H1 (cell line): ENCODE measurements at regions of chr22 and their contacts with region 1.

Region 1: DNA sequence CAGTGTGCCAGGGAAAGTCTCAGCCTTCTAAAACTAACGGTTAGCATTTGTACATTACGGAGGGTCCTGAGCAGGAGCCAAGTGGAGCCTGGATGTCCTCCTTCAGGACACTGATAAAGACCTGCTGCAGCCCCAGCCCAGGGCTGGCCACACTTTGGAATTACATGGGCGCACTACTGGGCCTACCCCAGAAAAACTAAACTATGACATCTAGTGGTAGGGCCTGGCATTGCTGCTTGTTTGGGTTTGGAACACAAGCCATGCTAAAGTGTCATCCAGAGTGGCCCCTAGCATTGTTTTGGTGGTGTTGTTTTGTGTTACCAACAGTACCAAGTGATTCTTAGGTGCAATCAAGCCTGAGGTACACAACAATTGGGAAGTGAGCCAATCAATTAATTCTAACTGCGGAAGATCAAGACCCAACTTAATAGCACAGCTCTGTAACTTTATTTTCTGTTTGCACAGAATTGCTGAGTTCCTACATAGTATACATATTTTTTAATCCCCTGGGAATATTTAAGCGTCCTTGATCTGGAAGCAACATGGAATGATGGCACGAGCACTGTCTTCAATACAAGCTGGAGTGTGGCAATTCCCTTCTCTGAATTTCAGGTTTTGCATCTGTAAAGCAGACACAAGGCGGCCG is 340.7 kb downstream of the LARGE1 start:
- DNase-seq: peak; percentile 53 to 94
- H3K4me3 ChIP-seq: no peak overlapping the region
- H3K27ac ChIP-seq: no peak overlapping the region
- H3K4me1 ChIP-seq: no peaks in the 10 kb centered on the region
- H3K27me3 ChIP-seq: no peaks in the 10 kb centered on the region
- CTCF ChIP-seq: peak; percentile 54 to 97 (median 94)
- EP300 ChIP-seq: no peak
- POLR2A ChIP-seq: no peak
- RAD21 ChIP-seq: peak; percentile 88 to 94

Region 2: GRCh38 chr22:33427461-33427860 is 152.1 kb before region 1 on chr22:
- CTCF ChIA-PET with region 1: no interaction called
- POLR2A ChIA-PET with region 1: no interaction called
- DNase-seq: no peak
- H3K4me3 ChIP-seq: no peak overlapping the region
- H3K27ac ChIP-seq: no peak overlapping the region
- H3K4me1 ChIP-seq: peaks cover 0 to 2% (median 0%) of the 10 kb centered on the region in 4 experiments; a peak in 2 of 7 replicates
- H3K27me3 ChIP-seq: no peaks in the 10 kb centered on the region
- CTCF ChIP-seq: no peak
- EP300 ChIP-seq: no peak
- POLR2A ChIP-seq: no peak
- RAD21 ChIP-seq: no peak

Region 3: GRCh38 chr22:33438273-33438672 is 141.3 kb before region 1 on chr22:
- CTCF ChIA-PET with region 1: no interaction called
- POLR2A ChIA-PET with region 1: no interaction called
- DNase-seq: no peak
- H3K4me3 ChIP-seq: no peak overlapping the region
- H3K27ac ChIP-seq: no peak overlapping the region
- H3K4me1 ChIP-seq: peaks cover 0 to 7% (median 2%) of the 10 kb centered on the region in 4 experiments; a peak in 3 of 7 replicates
- H3K27me3 ChIP-seq: no peaks in the 10 kb centered on the region
- CTCF ChIP-seq: no peak
- EP300 ChIP-seq: no peak
- POLR2A ChIP-seq: no peak
- RAD21 ChIP-seq: no peak

Region 4: DNA sequence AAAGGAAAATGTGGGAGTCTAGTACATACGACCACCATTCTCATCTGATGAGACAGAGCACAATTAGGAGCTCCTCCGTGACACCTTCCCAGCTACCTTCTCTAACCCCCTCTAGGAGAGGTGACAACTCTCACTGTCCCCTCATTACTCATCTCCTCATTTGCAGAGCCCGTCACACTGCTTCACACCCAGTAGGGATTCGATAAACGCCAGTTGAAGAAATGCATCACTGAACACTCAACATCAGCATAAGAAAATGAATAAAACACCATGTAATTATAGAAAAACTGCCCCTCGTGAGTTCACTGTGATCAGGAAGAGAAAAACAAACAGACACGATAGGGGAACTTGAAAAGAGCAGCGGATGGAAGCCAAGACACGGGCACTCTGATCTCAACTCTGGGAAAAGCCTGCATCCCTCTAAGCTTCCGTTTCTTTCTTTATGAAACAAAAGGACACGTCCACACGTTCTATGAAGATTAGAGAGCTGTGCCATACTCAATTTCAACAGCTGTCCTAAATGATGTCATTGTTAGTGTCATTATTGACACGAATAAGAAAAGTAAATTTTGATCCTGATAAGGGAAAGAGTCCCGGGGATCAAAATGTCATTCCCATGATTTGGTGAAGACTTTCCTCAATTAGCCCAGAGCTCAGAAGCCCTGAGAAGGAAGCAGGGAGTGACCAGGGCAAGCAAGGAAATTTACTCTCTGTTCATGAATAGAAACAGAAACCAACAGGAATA is 16.2 kb before region 1 on chr22:
- CTCF ChIA-PET with region 1: interaction called, 12 read pairs
- POLR2A ChIA-PET with region 1: no interaction called
- DNase-seq: no peak
- H3K4me3 ChIP-seq: no peak overlapping the region
- H3K27ac ChIP-seq: no peak overlapping the region
- H3K4me1 ChIP-seq: peaks cover 0 to 4% (median 1%) of the 10 kb centered on the region in 4 experiments; a peak in 3 of 7 replicates
- H3K27me3 ChIP-seq: no peaks in the 10 kb centered on the region
- CTCF ChIP-seq: no peak
- EP300 ChIP-seq: no peak
- POLR2A ChIP-seq: no peak
- RAD21 ChIP-seq: no peak